Posterior vena cava (tissue), 2 donors: ENCODE measurements at regions of chr4 and their contacts with region 1.

Region 1: GRCh38 chr4:18999595-18999994 is 978.0 kb upstream of the LCORL start:
- DNase-seq: no peak

Region 2: GRCh38 chr4:19095491-19096046 is 96.0 kb after region 1 on chr4:
- intact Hi-C with region 1: no loop called
- DNase-seq: no peak

Region 3: DNA sequence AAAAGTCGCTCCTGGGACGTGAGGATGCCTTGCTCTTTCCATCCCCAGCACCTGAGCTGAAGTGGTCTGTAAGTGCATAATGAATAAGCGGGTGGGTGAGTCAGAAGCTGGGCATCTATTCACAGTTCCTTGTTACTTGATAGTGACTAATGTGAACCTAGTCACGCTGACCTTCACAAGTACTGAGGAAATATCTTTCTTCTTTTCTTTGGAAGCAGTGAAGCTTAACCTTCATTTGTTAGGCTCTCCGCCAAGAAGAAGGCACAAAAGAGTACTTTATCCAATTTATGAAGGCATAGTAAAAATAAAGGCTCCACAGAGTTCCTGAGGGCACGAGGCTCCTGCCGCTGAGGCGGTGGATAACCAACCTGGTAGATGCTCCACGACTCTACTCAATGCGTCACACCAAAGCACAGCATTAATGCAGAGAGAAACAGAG is 776.4 kb after region 1 on chr4:
- intact Hi-C with region 1: loop called in 1 of 2 experiments (anchors 5 kb)
- DNase-seq: no peak